ENCODE measurements at regions of chr16 and their contacts with region 1.

Region 1: GRCh38 chr16:21158208-21159110 is at the start of gene LDAF1:
- DNase-seq: peak; percentile 83
- H3K4me3 ChIP-seq: peak within 1 kb of the TSS; percentile 74 to 76 (median 76)
- H3K27ac ChIP-seq: peak within 1 kb of the TSS; percentile 74
- H3K4me1 ChIP-seq: peaks cover 14% of the 10 kb centered on the region
- H3K27me3 ChIP-seq: no peaks in the 10 kb centered on the region
- CTCF ChIP-seq: no peak
- total RNA-seq, gene LDAF1: 43.5 to 131 TPM

Region 2: DNA sequence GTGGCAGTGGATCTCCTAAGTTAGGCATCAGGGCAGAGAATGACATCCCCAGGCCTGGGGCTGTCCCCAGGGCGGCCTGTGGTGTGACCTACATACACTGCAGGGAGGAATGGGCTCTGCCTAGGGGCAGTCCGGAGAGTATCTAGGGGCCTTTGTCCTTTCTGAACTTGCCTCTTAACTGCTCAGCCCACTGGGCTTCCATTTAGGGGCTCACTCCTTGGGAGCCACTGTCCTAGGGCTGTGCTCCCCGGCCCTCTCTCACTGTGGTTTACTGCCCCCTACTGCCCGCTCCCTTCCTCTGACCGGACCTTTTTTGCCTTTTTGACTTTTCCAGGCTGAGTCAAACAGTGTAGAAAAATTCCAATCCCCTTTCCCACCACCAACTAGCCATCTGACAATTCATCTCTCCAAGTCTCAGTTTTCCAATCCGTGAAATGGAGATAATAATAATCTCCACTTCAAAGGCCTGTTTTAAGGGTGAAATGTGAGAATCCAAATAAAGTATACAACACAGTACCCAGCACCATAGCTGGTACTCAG is 74.7 kb before region 1 on chr16:
- CTCF ChIA-PET with region 1: no interaction called
- dilution Hi-C with region 1: no loop called
- in situ Hi-C with region 1: no loop called
- intact Hi-C with region 1: no loop called
- DNase-seq: peak; percentile 36
- H3K4me3 ChIP-seq: no peak overlapping the region
- H3K27ac ChIP-seq: no peak overlapping the region
- H3K4me1 ChIP-seq: peaks cover 3% of the 10 kb centered on the region
- H3K27me3 ChIP-seq: no peaks in the 10 kb centered on the region
- CTCF ChIP-seq: peak; percentile 65 to 84

Region 3: GRCh38 chr16:21277927-21278706 is 119.7 kb after region 1 on chr16 and contains the start of gene CRYM:
- CTCF ChIA-PET with region 1: no interaction called
- dilution Hi-C with region 1: no loop called
- in situ Hi-C with region 1: no loop called
- intact Hi-C with region 1: loop called (anchors 1 kb)
- DNase-seq: peak; percentile 30
- H3K4me3 ChIP-seq: peak within 1 kb of the TSS; percentile 34 to 51 (median 51)
- H3K27ac ChIP-seq: no peak within 1 kb of the TSS
- H3K4me1 ChIP-seq: peaks cover 5% of the 10 kb centered on the region
- H3K27me3 ChIP-seq: peaks cover 6% of the 10 kb centered on the region
- CTCF ChIP-seq: peak; percentile 41 to 90
- total RNA-seq, gene CRYM: 0.17 to 0.54 TPM

Region 4: DNA sequence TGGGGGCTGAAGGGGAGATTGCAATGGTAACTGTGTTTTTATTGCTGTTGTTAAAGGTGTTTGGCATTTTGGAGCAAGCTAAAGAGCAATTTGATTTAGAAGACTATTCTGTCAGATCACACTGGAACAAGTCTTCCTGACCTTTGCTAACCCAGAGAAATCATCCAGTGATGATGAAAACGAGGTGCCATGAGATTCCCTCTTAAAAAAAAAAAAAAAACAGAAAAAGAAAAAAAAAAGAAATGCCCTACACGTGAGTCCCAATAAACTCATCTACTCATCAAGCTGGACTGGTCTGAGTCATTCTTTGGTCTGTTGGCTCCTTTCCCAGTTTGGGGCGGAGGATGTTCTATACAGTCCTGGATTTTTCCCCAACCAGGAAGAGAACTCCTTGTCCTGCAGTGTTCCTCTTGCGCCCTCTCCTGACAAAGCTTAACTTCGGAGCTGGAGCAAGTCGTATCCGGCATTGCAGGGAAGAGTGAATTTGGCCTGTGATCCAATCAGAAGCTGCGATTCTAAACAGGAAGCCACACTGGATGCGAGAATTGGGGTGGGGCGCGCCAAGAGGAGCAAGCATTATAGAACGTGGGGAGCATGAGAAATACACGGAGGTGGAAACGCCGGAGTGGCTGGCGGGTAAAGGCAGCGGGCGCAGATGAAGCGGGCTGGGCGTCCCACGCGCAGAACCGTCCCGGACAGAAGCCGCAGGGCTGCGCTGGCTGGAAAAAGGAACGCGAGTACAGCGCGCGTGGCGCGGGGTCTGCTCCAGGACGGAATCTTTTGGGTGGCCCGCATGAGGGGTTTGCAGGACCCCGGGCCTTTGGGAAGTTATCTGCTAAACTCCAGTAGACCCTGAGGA is 142.1 kb after region 1 on chr16:
- CTCF ChIA-PET with region 1: interaction called, 14 read pairs
- dilution Hi-C with region 1: no loop called
- in situ Hi-C with region 1: no loop called
- intact Hi-C with region 1: loop called (anchors 1 kb)
- DNase-seq: peak; percentile 100
- H3K4me3 ChIP-seq: peak overlapping the region; percentile 57 to 82 (median 68)
- H3K27ac ChIP-seq: peak overlapping the region; percentile 98
- H3K4me1 ChIP-seq: peaks cover 13% of the 10 kb centered on the region
- H3K27me3 ChIP-seq: no peaks in the 10 kb centered on the region
- CTCF ChIP-seq: peak; percentile 85 to 93

Region 5: DNA sequence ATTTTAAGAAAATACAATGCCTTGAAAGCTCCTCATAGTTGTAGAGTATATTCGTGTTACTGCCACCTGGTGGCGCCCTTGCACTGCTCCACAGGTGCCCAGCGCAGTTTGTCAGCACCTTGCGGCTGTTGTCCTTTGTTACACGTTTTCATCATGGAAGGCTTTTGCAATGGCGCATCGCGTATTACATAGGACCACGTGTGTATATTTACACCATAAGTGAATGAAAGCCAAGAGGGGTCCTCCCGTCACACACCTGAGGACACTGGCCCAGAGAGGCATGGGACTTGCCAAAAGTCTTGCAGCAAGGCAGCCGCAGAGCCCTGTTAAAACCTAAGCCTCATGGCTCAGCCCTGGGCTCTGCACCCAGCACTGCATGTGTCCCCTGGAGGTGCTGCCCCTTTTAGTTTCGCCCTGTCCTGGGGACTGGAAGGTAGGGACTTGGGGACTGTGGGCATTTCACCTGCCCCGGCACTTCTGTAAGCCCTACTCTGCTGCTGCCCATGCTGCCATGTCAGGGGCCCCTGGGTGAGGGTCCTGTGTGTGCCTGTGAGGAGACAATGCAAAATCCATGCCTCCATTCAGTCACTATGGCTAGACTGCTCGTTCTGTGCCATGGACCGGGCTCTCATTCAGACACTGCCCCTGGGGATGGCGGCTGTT is 1163.0 kb after region 1 on chr16:
- CTCF ChIA-PET with region 1: interaction called, 4 read pairs
- dilution Hi-C with region 1: no loop called
- in situ Hi-C with region 1: loop called in 1 of 2 experiments (anchors 25 kb)
- intact Hi-C with region 1: loop called (anchors 1 kb)
- DNase-seq: peak; percentile 55
- H3K4me3 ChIP-seq: no peak overlapping the region
- H3K27ac ChIP-seq: no peak overlapping the region
- H3K4me1 ChIP-seq: peaks cover 4% of the 10 kb centered on the region
- H3K27me3 ChIP-seq: no peaks in the 10 kb centered on the region
- CTCF ChIP-seq: peak; percentile 91 to 92

Region 6: GRCh38 chr16:22346483-22346882 is 1188.0 kb after region 1 on chr16:
- CTCF ChIA-PET with region 1: no interaction called
- dilution Hi-C with region 1: no loop called
- in situ Hi-C with region 1: loop called in 1 of 2 experiments (anchors 25 kb)
- intact Hi-C with region 1: no loop called
- DNase-seq: no peak
- H3K4me3 ChIP-seq: no peak overlapping the region
- H3K27ac ChIP-seq: peak overlapping the region; percentile 96
- H3K4me1 ChIP-seq: peaks cover 38% of the 10 kb centered on the region
- H3K27me3 ChIP-seq: no peaks in the 10 kb centered on the region
- CTCF ChIP-seq: no peak

Measured in mammary epithelial cell (primary cell).